ENCODE measurements at regions of chr7 and their contacts with region 1.

Region 1: GRCh38 chr7:18590744-18591340 is 95.3 kb downstream of the HDAC9 start:
- DNase-seq: peak in 1 of 2 experiments; percentile 9
- H3K4me3 ChIP-seq: no peak overlapping the region
- H3K4me3 Mint-ChIP-seq: no peak overlapping the region
- H3K27ac Mint-ChIP-seq: no peak overlapping the region
- H3K4me1 ChIP-seq: no peaks in the 10 kb centered on the region
- H3K4me1 Mint-ChIP-seq: no peaks in the 10 kb centered on the region
- H3K27me3 ChIP-seq: no peaks in the 10 kb centered on the region; the same call in 1 of the 2 replicates
- H3K27me3 Mint-ChIP-seq: no peaks in the 10 kb centered on the region
- CTCF ChIP-seq: peak; percentile 35 to 60

Region 2: GRCh38 chr7:18666107-18666728 is 75.4 kb after region 1 on chr7:
- CTCF ChIA-PET with region 1: interaction called, 3 read pairs
- POLR2A ChIA-PET with region 1: no interaction called
- intact Hi-C with region 1: loop called (anchors 1 kb)
- DNase-seq: peak; percentile 68 to 70
- H3K4me3 ChIP-seq: no peak overlapping the region
- H3K4me3 Mint-ChIP-seq: no peak overlapping the region
- H3K27ac Mint-ChIP-seq: no peak overlapping the region
- H3K4me1 ChIP-seq: no peaks in the 10 kb centered on the region
- H3K4me1 Mint-ChIP-seq: no peaks in the 10 kb centered on the region
- H3K27me3 ChIP-seq: no peaks in the 10 kb centered on the region
- H3K27me3 Mint-ChIP-seq: no peaks in the 10 kb centered on the region
- CTCF ChIP-seq: peak; percentile 81 to 85

Region 3: GRCh38 chr7:18829858-18830285 is 239.0 kb after region 1 on chr7:
- CTCF ChIA-PET with region 1: no interaction called
- POLR2A ChIA-PET with region 1: no interaction called
- intact Hi-C with region 1: no loop called
- DNase-seq: no peak
- H3K4me3 ChIP-seq: no peak overlapping the region
- H3K4me3 Mint-ChIP-seq: no peak overlapping the region
- H3K27ac Mint-ChIP-seq: no peak overlapping the region
- H3K4me1 ChIP-seq: no peaks in the 10 kb centered on the region
- H3K4me1 Mint-ChIP-seq: no peaks in the 10 kb centered on the region
- H3K27me3 ChIP-seq: no peaks in the 10 kb centered on the region
- H3K27me3 Mint-ChIP-seq: no peaks in the 10 kb centered on the region
- CTCF ChIP-seq: no peak

Region 4: GRCh38 chr7:19442016-19442785 is 851.4 kb after region 1 on chr7:
- CTCF ChIA-PET with region 1: no interaction called
- POLR2A ChIA-PET with region 1: no interaction called
- intact Hi-C with region 1: loop called (anchors 5 kb)
- DNase-seq: peak in 1 of 2 experiments; percentile 24
- H3K4me3 ChIP-seq: no peak overlapping the region
- H3K4me3 Mint-ChIP-seq: no peak overlapping the region
- H3K27ac Mint-ChIP-seq: no peak overlapping the region
- H3K4me1 ChIP-seq: no peaks in the 10 kb centered on the region
- H3K4me1 Mint-ChIP-seq: no peaks in the 10 kb centered on the region
- H3K27me3 ChIP-seq: no peaks in the 10 kb centered on the region
- H3K27me3 Mint-ChIP-seq: peaks cover 8% of the 10 kb centered on the region
- CTCF ChIP-seq: peak in 1 of 2 experiments; percentile 39